SK-N-SH (cell line): ENCODE measurements at regions of chr12 and their contacts with region 1.

Region 1: DNA sequence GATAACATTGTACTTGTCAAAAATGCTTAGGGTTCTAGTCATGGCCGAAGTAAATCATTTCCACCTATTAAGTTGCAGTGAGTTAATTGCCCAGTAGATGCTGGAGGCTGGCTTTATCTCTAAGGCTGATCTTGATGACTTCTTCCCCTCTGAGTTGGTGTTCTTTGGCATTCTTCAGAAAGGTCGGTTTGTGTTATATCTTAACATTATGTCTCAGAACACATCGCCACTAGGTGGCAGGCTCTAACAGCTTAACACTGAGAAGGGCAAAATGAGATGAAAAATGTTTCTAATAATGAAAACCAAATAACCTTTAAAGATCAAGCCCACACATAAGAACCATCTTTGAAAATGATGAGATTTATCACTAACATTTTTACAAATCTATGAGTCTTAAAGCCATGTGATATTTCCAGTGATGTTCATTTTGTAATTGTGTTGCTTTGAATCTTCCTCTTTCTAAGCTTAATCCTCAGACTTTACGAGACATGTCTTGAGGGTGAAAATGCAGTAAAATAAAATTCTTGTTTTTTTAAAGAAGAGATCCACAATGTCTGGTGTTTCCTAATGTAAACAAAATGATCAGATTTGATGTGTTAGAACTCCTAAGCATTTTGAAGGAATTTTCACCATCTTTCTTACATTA is 28.6 kb downstream of the SUDS3 start:
- DNase-seq: peak; percentile 44
- H3K4me3 ChIP-seq: no peak overlapping the region; a peak in 1 of 4 replicates
- H3K27ac ChIP-seq: no peak overlapping the region
- H3K4me1 ChIP-seq: no peaks in the 10 kb centered on the region; a peak in 1 of 4 replicates
- H3K27me3 ChIP-seq: no peaks in the 10 kb centered on the region
- CTCF ChIP-seq: peak; percentile 92
- EP300 ChIP-seq: no peak
- RAD21 ChIP-seq: peak; percentile 85

Region 2: DNA sequence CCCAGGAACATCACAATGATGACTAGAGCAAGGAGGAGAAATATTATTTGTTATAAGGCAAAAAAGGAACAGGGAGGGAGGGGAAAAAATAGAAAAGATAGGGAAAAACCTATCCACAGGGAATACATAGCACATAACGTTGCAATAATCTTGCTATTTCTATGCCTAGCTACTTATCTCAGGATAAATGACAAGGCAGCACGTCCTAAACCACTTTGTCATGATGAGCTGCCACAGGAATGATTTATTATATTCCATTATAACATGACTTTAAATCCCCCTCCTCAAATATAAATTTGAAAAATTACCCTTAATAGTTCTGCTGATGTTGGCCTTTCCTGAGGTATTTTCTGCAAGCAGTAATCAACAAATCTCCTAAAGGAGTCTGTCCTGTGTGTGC is 192.4 kb before region 1 on chr12:
- CTCF ChIA-PET with region 1: no interaction called
- POLR2A ChIA-PET with region 1: no interaction called
- DNase-seq: no peak
- H3K4me3 ChIP-seq: no peak overlapping the region
- H3K27ac ChIP-seq: no peak overlapping the region
- H3K4me1 ChIP-seq: no peaks in the 10 kb centered on the region
- H3K27me3 ChIP-seq: no peaks in the 10 kb centered on the region
- CTCF ChIP-seq: no peak
- EP300 ChIP-seq: no peak
- RAD21 ChIP-seq: no peak

Region 3: GRCh38 chr12:118391424-118391823 is 13.6 kb before region 1 on chr12:
- CTCF ChIA-PET with region 1: interaction called, 24 read pairs
- POLR2A ChIA-PET with region 1: interaction called, 3 read pairs
- DNase-seq: no peak
- H3K4me3 ChIP-seq: no peak overlapping the region
- H3K27ac ChIP-seq: no peak overlapping the region
- H3K4me1 ChIP-seq: no peaks in the 10 kb centered on the region; a peak in 1 of 4 replicates
- H3K27me3 ChIP-seq: no peaks in the 10 kb centered on the region
- CTCF ChIP-seq: no peak
- EP300 ChIP-seq: no peak
- RAD21 ChIP-seq: no peak

Region 4: GRCh38 chr12:118418385-118419057 is 13.5 kb after region 1 on chr12:
- CTCF ChIA-PET with region 1: interaction called, 14 read pairs
- POLR2A ChIA-PET with region 1: no interaction called
- DNase-seq: no peak
- H3K4me3 ChIP-seq: no peak overlapping the region
- H3K27ac ChIP-seq: no peak overlapping the region
- H3K4me1 ChIP-seq: no peaks in the 10 kb centered on the region
- H3K27me3 ChIP-seq: no peaks in the 10 kb centered on the region
- CTCF ChIP-seq: no peak
- EP300 ChIP-seq: no peak
- RAD21 ChIP-seq: no peak

Region 5: DNA sequence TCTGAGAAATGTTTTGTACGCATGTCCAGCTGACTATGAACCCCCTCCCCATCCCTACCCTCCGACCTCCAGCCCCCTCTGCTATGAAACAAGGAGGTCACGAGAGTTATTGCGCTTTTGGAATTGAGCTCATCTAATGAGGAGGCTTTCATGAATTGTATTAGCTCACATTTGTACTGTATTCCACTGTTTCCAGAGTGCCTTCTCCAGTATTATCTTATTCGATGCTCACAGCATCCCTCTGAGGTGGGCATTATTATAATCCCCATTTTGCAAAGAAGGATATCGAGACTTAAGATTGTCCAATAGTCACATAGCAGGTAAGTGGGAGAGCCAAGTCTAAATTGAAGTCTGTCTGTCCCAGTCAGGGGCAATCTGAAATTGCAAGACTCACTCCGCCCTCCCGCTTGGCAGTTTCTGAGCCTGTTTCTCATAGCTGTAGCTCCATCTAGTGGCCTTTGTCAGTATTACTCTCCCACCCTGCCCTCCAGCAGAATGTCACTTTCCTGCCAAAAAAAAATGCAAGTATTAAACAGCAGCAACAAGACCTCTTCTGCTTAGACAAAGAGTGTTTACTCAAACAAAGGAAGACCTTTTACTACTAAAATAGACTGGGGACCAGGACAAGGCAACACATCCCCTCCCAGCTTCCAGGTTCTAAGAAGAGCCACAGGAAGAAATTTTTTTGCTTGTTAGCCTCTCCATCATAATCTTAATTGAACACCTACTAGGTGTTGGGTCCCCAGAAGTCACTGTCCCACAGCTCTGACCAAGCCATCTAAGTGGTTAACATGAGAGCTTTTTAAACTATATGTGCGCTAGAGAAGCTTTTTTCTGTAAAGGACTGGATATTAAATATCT is 1140.0 kb after region 1 on chr12:
- CTCF ChIA-PET with region 1: interaction called, 16 read pairs
- POLR2A ChIA-PET with region 1: no interaction called
- DNase-seq: peak; percentile 75
- H3K4me3 ChIP-seq: 0 out of 4 replicates have a peak overlapping the region, but pooled peaks of 1 of the 2 experiments have one; percentile 1
- H3K27ac ChIP-seq: no peak overlapping the region
- H3K4me1 ChIP-seq: no peaks in the 10 kb centered on the region
- H3K27me3 ChIP-seq: no peaks in the 10 kb centered on the region
- CTCF ChIP-seq: peak; percentile 86
- EP300 ChIP-seq: no peak
- RAD21 ChIP-seq: peak; percentile 94